ENCODE measurements at regions of chr17 and their contacts with region 1.

Region 1: DNA sequence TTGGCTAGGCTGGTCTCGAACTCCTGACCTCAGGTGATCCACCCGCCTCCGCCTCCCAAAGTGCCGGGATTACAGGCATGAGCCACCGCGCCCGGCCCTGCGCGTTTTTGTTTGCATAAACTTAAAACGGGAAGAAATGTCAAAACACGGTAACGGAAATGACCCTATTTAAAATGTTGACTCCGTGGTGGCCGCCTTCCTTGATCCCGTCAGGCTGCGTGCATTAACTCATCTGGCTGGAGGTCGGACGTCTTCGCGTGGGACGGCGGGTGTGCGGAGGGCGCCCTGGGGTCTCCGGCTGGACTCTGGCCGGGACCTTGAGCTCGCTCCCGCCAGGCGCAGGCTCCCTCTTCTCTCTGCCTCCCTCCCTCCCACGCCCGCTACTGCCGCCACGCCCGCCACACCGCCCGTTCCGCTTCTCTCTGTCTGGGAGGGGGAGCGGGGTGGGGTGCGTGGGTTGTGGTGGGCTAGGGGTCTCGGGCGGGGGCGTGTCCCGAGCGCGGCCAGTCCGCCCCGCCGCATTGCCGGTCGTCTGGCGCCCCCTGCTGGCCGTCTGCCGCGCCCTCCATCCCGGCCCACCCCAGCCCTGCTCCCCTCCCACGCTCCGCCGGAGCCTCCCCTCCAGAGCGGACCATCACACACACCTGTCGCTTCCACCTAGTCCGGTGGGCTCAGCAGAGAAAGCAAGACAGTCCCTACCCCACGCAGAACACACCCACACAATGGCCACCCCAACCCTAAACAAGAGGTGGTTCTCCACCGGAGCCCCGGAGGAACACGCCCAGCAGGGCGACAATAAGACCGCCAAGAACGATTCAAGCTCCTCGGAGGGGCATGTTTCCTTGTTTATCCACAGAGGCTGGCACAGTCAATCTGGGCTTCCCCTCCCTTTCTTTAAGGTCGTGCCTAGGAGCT is 1.2 kb upstream of the CCDC42 start:
- DNase-seq: peak; percentile 38
- ATAC-seq: peak; percentile 90
- H3K4me3 ChIP-seq: peak overlapping the region; percentile 68
- H3K27ac ChIP-seq: no peak overlapping the region
- H3K4me1 ChIP-seq: no peaks in the 10 kb centered on the region
- H3K27me3 ChIP-seq: no peaks in the 10 kb centered on the region
- CTCF ChIP-seq: peak; percentile 65

Region 2: DNA sequence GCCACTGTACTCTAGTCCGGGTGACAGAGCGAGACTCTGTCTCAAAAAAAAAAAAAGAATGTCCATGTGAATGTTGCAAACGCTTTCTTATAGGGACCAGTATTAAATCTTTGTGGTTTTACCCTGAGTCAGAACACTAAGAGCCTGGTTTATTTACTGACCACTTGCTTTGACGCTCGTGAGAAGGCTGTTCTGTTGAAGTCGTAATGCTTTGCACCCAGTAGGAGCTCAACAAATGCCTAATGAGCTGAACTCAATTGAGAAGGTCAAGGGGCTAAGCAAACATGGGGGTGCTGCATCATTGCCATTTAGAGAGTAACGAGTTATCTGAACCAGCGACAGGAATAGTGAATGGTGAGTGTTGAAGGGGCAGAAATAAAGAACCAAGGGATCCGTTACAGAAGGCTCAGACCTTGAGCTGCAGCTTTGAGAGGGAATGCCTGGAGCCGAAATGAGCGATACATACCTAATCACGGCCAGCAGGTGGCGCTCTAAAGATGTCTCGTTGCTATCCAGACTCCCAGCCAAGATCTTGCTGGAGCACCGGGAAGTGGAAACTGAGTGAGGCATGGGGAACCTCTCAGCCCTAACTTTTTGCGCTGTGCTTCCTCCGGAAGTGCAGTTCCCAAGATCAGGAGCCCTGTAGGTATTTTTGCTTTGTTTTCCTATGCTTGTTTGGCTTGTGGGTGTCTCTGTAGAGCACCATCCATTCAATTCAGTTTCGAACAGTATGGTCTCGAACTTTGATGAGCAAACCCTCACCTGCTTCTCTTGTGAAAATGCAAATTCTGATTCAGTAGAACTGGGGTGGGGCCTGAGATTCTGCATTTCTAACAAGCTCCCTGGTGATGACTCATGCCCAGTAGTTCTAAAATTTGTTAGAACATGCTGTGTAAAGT is 335.6 kb before region 1 on chr17:
- CTCF ChIA-PET with region 1: interaction called, 5 read pairs
- POLR2A ChIA-PET with region 1: no interaction called
- intact Hi-C with region 1: loop called (anchors 2 kb)
- DNase-seq: peak; percentile 84
- ATAC-seq: peak; percentile 89
- H3K4me3 ChIP-seq: peak overlapping the region; percentile 58
- H3K27ac ChIP-seq: peak overlapping the region; percentile 50
- H3K4me1 ChIP-seq: peaks cover 16% of the 10 kb centered on the region
- H3K27me3 ChIP-seq: no peaks in the 10 kb centered on the region
- CTCF ChIP-seq: peak; percentile 81

Region 3: DNA sequence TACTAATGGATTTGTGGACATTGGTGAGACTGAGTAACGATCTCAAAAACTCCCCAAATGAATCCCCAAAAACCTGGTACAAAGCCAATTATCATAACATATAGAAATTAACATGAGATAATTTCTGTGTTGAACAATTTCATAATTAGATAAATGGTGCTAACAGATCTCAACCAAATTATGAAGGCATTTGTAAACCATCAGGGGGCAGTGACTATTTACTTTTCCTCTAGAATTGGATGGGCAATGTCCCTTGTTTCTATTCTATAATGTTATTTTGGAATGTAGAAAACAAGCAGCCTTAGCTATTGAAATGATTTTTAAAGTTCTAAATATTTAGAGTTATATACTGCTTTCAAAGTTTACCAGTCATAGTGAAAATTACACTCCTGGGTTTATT is 173.1 kb before region 1 on chr17:
- CTCF ChIA-PET with region 1: no interaction called
- POLR2A ChIA-PET with region 1: no interaction called
- intact Hi-C with region 1: loop called (anchors 1 kb)
- DNase-seq: no peak
- ATAC-seq: no peak
- H3K4me3 ChIP-seq: no peak overlapping the region
- H3K27ac ChIP-seq: no peak overlapping the region
- H3K4me1 ChIP-seq: no peaks in the 10 kb centered on the region
- H3K27me3 ChIP-seq: no peaks in the 10 kb centered on the region
- CTCF ChIP-seq: peak; percentile 48

Measured in PC-3 (cell line).